CD4-positive, alpha-beta memory T cell (primary cell): ENCODE measurements at regions of chr19 and their contacts with region 1.

Region 1: GRCh38 chr19:53879140-53880081 is 2.6 kb upstream of the PRKCG start:
- DNase-seq: peak; percentile 72 to 74 (median 73)
- H3K4me3 ChIP-seq: peak overlapping the region; percentile 19 to 53
- H3K4me3 Mint-ChIP-seq: peak overlapping the region in 2 of 8 donors; percentile 73 to 79
- H3K27ac ChIP-seq: no peak overlapping the region
- H3K27ac Mint-ChIP-seq: peak overlapping the region in 5 of 7 donors; percentile 10 to 80 (median 65)
- H3K4me1 ChIP-seq: peaks cover 76% of the 10 kb centered on the region
- H3K4me1 Mint-ChIP-seq: peaks cover 27 to 61% (median 37%) of the 10 kb centered on the region in 4 donors
- H3K27me3 ChIP-seq: peaks cover 40% of the 10 kb centered on the region
- H3K27me3 Mint-ChIP-seq: peaks cover 14 to 17% of the 10 kb centered on the region in 2 donors

Region 2: GRCh38 chr19:53294786-53295441 is 584.5 kb before region 1 on chr19:
- CTCF ChIA-PET with region 1: no interaction called
- POLR2A ChIA-PET with region 1: no interaction called
- intact Hi-C with region 1: no loop called
- DNase-seq: no peak
- H3K4me3 ChIP-seq: no peak overlapping the region
- H3K4me3 Mint-ChIP-seq: no peak overlapping the region
- H3K27ac ChIP-seq: no peak overlapping the region
- H3K27ac Mint-ChIP-seq: no peak overlapping the region
- H3K4me1 ChIP-seq: no peaks in the 10 kb centered on the region
- H3K4me1 Mint-ChIP-seq: no peaks in the 10 kb centered on the region
- H3K27me3 ChIP-seq: no peaks in the 10 kb centered on the region
- H3K27me3 Mint-ChIP-seq: no peaks in the 10 kb centered on the region

Region 3: DNA sequence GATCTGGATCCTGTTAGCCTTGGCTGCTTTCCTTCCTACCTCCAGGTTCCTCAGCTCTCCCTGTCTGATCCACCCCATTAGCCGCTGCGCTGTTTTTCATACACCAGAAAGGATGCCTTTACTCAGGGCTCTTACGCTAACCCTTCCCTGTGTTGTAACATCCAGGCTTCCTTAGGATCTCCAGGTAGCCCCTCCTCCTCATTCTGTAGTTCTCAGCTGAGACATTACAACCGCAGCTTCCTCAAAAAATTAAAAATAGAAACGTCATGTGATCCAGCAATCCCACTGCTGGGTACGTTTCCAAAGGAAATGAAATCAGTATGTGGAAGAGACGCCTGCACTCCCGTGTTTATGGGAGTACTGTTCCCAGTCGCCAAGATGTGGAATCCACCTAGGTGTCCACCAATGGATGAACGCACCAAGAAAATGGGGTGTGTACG is 30.2 kb before region 1 on chr19:
- CTCF ChIA-PET with region 1: interaction called, 47 read pairs
- POLR2A ChIA-PET with region 1: interaction called, 3 read pairs
- intact Hi-C with region 1: loop called (anchors 1 kb)
- DNase-seq: no peak
- H3K4me3 ChIP-seq: no peak overlapping the region
- H3K4me3 Mint-ChIP-seq: peak overlapping the region in 1 of 8 donors; percentile 23
- H3K27ac ChIP-seq: no peak overlapping the region
- H3K27ac Mint-ChIP-seq: no peak overlapping the region
- H3K4me1 ChIP-seq: peaks cover 7% of the 10 kb centered on the region
- H3K4me1 Mint-ChIP-seq: peaks cover 6 to 12% (median 9%) of the 10 kb centered on the region in 4 donors
- H3K27me3 ChIP-seq: no peaks in the 10 kb centered on the region
- H3K27me3 Mint-ChIP-seq: peaks cover 24% of the 10 kb centered on the region in 2 donors